Mammary epithelial cell (primary cell): ENCODE measurements at regions of chr11 and their contacts with region 1.

Region 1: DNA sequence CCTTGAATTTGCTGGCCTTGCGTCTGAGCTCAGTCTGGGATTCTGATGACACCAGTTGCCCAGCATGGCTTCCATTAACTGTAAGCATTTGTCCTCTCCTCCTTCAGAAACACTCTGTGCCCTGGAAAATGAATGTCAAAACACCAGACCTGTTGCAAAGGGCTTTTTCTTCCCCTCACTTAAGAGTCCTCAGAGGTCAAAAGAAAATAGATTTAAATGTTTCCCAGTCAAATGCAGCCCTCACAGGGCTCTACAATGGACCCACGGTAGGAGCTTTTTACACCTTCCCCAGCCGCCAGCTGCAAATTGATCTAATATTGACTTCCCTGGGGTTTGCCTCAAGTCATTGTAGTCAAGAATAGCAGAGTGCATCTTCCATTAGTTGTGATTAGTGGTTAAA is 332.2 kb downstream of the INSC start:
- DNase-seq: no peak
- H3K4me3 ChIP-seq: no peak overlapping the region
- H3K27ac ChIP-seq: no peak overlapping the region
- H3K4me1 ChIP-seq: no peaks in the 10 kb centered on the region
- H3K27me3 ChIP-seq: no peaks in the 10 kb centered on the region
- CTCF ChIP-seq: no peak

Region 2: GRCh38 chr11:15379483-15379882 is 67.4 kb before region 1 on chr11:
- CTCF ChIA-PET with region 1: no interaction called
- dilution Hi-C with region 1: no loop called
- in situ Hi-C with region 1: no loop called
- intact Hi-C with region 1: no loop called
- DNase-seq: no peak
- H3K4me3 ChIP-seq: no peak overlapping the region
- H3K27ac ChIP-seq: no peak overlapping the region
- H3K4me1 ChIP-seq: no peaks in the 10 kb centered on the region
- H3K27me3 ChIP-seq: no peaks in the 10 kb centered on the region
- CTCF ChIP-seq: no peak

Region 3: GRCh38 chr11:15412054-15412453 is 34.9 kb before region 1 on chr11:
- CTCF ChIA-PET with region 1: no interaction called
- dilution Hi-C with region 1: loop called (anchors 5 kb)
- in situ Hi-C with region 1: no loop called
- intact Hi-C with region 1: no loop called
- DNase-seq: peak; percentile 1
- H3K4me3 ChIP-seq: no peak overlapping the region
- H3K27ac ChIP-seq: no peak overlapping the region
- H3K4me1 ChIP-seq: no peaks in the 10 kb centered on the region
- H3K27me3 ChIP-seq: no peaks in the 10 kb centered on the region
- CTCF ChIP-seq: no peak